Caco-2 (cell line): ENCODE measurements at regions of chr20 and their contacts with region 1.

Region 1: GRCh38 chr20:7272512-7272911 is 505.0 kb downstream of the BMP2 start:
- DNase-seq: peak in 1 of 2 experiments; percentile 38
- H3K4me3 ChIP-seq: no peak overlapping the region
- H3K4me3 Mint-ChIP-seq: no peak overlapping the region
- H3K27ac Mint-ChIP-seq: no peak overlapping the region
- H3K4me1 ChIP-seq: no peaks in the 10 kb centered on the region
- H3K4me1 Mint-ChIP-seq: no peaks in the 10 kb centered on the region
- H3K27me3 ChIP-seq: no peaks in the 10 kb centered on the region
- H3K27me3 Mint-ChIP-seq: no peaks in the 10 kb centered on the region
- CTCF ChIP-seq: peak; percentile 47 to 69

Region 2: DNA sequence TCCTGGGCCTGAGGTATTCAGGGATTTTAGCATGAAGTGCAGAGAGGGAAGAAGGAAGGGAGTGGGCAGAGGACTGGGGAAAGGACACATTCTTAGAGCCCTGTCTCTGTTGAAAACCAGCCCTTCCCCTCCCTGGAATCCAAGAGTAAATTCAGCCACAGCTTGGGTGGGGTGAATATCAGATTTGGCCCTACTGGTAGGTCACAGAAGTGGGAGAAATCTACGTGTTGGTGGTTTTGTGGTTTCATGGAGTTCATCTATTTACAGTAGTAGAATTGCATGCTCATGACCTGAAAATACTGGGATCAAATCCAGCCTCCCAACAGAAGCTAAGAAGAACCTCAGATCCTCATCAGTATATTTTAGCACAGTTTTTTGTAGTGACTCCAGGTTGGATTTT is 100.6 kb before region 1 on chr20:
- CTCF ChIA-PET with region 1: no interaction called
- POLR2A ChIA-PET with region 1: no interaction called
- intact Hi-C with region 1: loop called (anchors 5 kb)
- DNase-seq: peak in 1 of 2 experiments; percentile 9
- H3K4me3 ChIP-seq: no peak overlapping the region
- H3K4me3 Mint-ChIP-seq: no peak overlapping the region
- H3K27ac Mint-ChIP-seq: no peak overlapping the region
- H3K4me1 ChIP-seq: no peaks in the 10 kb centered on the region
- H3K4me1 Mint-ChIP-seq: peaks cover 6% of the 10 kb centered on the region
- H3K27me3 ChIP-seq: no peaks in the 10 kb centered on the region
- H3K27me3 Mint-ChIP-seq: no peaks in the 10 kb centered on the region
- CTCF ChIP-seq: no peak